HEK293 (cell line): ENCODE measurements at regions of chr6 and their contacts with region 1.

Region 1: GRCh38 chr6:7479801-7480266 is 61.6 kb upstream of the DSP start:
- H3K4me3 ChIP-seq: no peak overlapping the region
- H3K27ac ChIP-seq: no peak overlapping the region
- H3K4me1 ChIP-seq: no peaks in the 10 kb centered on the region; the same call in 1 of the 2 replicates
- CTCF ChIP-seq: no peak

Region 2: DNA sequence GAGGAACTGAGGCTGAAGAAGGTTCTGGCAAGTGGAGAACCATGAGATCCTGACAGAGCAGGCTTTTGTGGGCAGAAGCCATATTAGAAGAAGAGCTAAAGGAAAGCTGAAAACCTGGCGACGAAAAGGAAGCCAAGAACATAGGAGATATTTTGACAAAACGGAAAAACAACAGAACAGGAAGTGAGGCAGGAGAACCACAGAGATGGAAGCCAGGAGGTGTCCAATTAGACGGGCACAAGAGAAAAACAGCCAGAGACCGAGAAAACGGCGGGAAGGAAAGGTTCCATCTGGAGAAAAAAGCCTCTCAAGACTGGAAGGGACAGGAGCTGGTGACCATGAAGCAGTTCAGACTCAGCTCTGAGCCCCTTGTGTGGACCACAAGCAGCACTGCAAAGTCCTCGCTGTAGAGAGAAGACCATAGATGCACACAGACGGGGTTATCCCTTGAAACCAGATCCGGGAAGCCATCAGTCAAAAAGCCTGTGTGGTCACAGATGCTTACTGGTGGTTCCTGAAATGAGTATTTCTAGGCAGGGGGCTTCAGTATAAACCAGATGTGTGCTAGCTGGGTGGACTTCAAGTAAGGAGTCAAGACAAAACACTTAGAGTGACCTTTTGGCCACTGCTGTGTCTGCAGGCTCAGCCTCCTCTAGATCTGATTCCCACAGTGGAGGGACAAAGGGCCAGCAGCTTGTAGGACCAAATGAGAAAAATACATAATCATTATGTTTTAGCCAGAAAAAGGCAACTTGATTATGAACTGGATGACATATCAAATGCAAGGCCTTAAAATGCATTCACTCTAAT is 197.5 kb before region 1 on chr6:
- CTCF ChIA-PET with region 1: interaction called, 11 read pairs
- POLR2A ChIA-PET with region 1: no interaction called
- H3K4me3 ChIP-seq: no peak overlapping the region
- H3K27ac ChIP-seq: no peak overlapping the region
- H3K4me1 ChIP-seq: no peaks in the 10 kb centered on the region
- CTCF ChIP-seq: no peak